Breast epithelium (tissue), 4 donors: ENCODE measurements at regions of chrX and their contacts with region 1.

Region 1: DNA sequence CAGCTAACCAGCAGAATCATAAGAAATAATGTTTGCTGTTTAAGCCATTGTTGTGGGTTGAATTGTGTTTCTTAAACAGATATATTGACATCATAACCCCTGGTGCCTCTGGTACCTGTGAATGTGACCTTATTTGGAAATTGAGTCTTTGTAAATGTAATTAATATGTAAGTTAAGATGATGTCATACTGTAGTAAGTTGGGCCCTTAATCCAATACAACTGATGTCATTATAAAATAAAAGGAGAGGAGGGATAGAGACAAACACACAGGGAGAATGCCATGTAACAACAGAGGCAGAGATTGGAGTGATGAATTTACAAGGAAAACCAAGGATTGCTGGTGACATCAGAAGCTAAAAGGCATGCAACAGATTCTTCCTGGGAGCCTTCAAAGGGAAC is 141.4 kb downstream of the ZIC3 start:
- DNase-seq: no peak
- H3K4me3 ChIP-seq: no peak overlapping the region
- H3K27ac ChIP-seq: no peak overlapping the region
- H3K4me1 ChIP-seq: no peaks in the 10 kb centered on the region
- H3K27me3 ChIP-seq: peaks cover 0 to 16% of the 10 kb centered on the region in 2 donors
- CTCF ChIP-seq: no peak
- POLR2A ChIP-seq: no peak

Region 2: DNA sequence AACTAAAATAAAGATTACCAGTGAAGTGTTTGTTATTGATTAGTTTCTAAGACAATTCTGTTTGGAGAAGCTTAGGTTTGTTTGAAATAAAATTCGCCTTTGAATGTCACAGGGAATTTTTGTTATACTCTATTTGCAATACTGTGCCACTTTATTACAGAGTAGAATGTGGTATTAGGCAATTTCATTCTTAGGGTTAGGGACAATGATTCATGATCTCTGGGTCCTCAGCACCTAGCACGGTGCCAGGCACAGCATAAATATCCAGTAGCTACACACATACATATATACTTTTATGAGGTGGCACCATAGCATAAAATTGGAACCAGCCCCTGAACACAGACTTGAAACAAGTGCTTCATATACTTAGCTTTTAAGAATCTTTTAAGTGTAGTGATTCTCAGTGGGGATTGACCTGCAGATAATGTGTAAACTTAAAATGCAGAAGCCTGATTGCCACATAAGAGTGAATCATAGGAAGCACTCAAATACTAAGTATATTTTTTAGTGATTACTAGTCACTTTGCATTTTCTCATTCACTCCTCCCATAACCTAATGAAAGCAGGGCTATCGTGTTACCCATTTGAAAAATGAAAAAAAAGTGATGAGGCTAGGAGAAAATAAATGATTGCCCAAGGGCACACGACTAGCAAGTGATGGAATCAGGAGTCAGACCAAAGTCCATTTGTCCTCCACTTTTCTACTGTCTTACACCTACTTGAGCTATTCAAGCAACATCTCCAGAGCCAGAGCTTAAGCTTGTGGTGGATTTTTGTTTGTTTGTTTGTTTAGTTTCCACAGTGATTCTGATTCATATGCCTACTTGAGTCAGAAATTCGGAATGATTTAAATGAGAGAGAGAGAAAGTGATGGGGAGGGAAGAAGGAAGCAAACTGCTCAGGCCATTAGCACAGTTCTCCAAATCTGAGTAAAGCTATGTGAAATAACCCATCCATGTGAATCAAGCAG is 1370.2 kb after region 1 on chrX:
- intact Hi-C with region 1: loop called (anchors 10 kb)
- DNase-seq: no peak
- H3K4me3 ChIP-seq: no peak overlapping the region
- H3K27ac ChIP-seq: no peak overlapping the region
- H3K4me1 ChIP-seq: no peaks in the 10 kb centered on the region
- H3K27me3 ChIP-seq: peaks cover 0 to 15% of the 10 kb centered on the region in 2 donors
- CTCF ChIP-seq: no peak
- POLR2A ChIP-seq: no peak